ENCODE measurements at regions of chr5 and their contacts with region 1.

Region 1: GRCh38 chr5:16489322-16489791 is 23.8 kb upstream of the ZNF622 start:
- DNase-seq: peak; percentile 25
- ATAC-seq: peak; percentile 43
- H3K4me3 ChIP-seq: no peak overlapping the region
- H3K4me3 Mint-ChIP-seq: no peak overlapping the region
- H3K27ac ChIP-seq: no peak overlapping the region
- H3K27ac Mint-ChIP-seq: no peak overlapping the region
- H3K4me1 ChIP-seq: no peaks in the 10 kb centered on the region
- H3K4me1 Mint-ChIP-seq: no peaks in the 10 kb centered on the region
- H3K27me3 ChIP-seq: no peaks in the 10 kb centered on the region
- H3K27me3 Mint-ChIP-seq: no peaks in the 10 kb centered on the region
- CTCF ChIP-seq: peak; percentile 65

Region 2: GRCh38 chr5:16383544-16384052 is 105.8 kb before region 1 on chr5:
- CTCF ChIA-PET with region 1: no interaction called
- POLR2A ChIA-PET with region 1: no interaction called
- intact Hi-C with region 1: no loop called
- DNase-seq: no peak
- ATAC-seq: no peak
- H3K4me3 ChIP-seq: no peak overlapping the region
- H3K4me3 Mint-ChIP-seq: no peak overlapping the region
- H3K27ac ChIP-seq: no peak overlapping the region
- H3K27ac Mint-ChIP-seq: no peak overlapping the region
- H3K4me1 ChIP-seq: no peaks in the 10 kb centered on the region
- H3K4me1 Mint-ChIP-seq: no peaks in the 10 kb centered on the region
- H3K27me3 ChIP-seq: no peaks in the 10 kb centered on the region
- H3K27me3 Mint-ChIP-seq: peaks cover 11% of the 10 kb centered on the region
- CTCF ChIP-seq: no peak

Region 3: DNA sequence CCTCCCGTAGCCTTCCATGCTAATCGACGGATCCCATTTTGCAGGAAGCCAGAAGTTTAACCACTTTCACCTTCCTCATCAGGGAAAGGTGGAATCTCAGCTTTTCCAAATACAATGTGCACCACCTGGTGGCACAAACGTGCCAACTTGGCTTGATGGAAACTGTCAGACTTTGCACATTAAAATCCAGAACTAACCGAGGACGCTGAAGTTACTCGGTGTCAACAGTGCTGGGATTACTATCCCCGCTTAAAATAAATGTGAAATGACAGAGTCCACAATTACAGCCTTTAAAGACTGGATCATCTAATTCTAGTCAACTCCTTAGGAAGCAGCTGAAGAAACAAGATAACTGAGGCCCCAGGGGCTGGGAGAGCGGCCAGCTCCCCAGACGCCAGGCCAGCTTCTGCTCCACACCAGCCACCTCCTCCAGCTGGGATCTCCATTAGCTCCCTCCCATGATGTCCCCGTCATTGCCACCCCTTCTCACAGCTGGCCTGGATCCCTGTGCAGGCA is 177.6 kb after region 1 on chr5:
- CTCF ChIA-PET with region 1: interaction called, 27 read pairs
- POLR2A ChIA-PET with region 1: no interaction called
- intact Hi-C with region 1: no loop called
- DNase-seq: peak; percentile 18
- ATAC-seq: no peak
- H3K4me3 ChIP-seq: no peak overlapping the region
- H3K4me3 Mint-ChIP-seq: no peak overlapping the region
- H3K27ac ChIP-seq: no peak overlapping the region
- H3K27ac Mint-ChIP-seq: no peak overlapping the region
- H3K4me1 ChIP-seq: no peaks in the 10 kb centered on the region
- H3K4me1 Mint-ChIP-seq: no peaks in the 10 kb centered on the region
- H3K27me3 ChIP-seq: no peaks in the 10 kb centered on the region
- H3K27me3 Mint-ChIP-seq: no peaks in the 10 kb centered on the region
- CTCF ChIP-seq: peak; percentile 44

Measured in B cell (primary cell).